ENCODE measurements at regions of chr2 and their contacts with region 1.

Region 1: DNA sequence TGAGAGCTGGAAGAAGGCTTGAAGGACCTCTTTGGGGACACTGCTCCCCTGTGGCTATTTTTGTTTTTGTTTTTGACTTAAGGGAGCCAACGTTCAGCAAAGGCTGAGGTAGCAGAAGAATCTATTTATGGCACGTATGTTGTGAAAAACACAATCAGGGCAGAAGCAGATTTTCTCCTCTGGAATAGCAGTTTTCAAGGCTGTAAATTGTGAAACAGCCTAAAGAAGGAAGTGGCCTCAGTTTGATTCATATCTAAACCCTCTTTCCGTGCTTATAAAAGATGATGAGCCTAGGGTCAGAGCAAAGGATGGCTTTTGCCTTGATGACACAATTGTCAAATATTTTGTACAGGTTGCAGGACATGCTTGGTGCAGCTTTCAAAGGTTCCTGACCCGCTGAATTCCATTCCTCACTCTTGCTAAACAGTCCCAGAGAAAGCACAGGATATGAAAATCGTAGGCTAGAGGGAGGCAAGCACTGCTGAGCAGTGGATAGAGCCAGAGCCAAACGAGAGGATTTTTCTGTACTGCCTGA is 106.2 kb upstream of the DLX2 start:
- DNase-seq: peak; percentile 80
- H3K4me3 ChIP-seq: no peak overlapping the region
- H3K27ac ChIP-seq: peak overlapping the region; percentile 47
- H3K4me1 ChIP-seq: peaks cover 28% of the 10 kb centered on the region
- H3K27me3 ChIP-seq: no peaks in the 10 kb centered on the region
- CTCF ChIP-seq: peak in 1 of 2 donors; percentile 28

Region 2: GRCh38 chr2:172052000-172052983 is 156.6 kb before region 1 on chr2:
- CTCF ChIA-PET with region 1: no interaction called
- dilution Hi-C with region 1: no loop called
- in situ Hi-C with region 1: no loop called
- intact Hi-C with region 1: no loop called
- DNase-seq: peak; percentile 5
- H3K4me3 ChIP-seq: no peak overlapping the region
- H3K27ac ChIP-seq: no peak overlapping the region
- H3K4me1 ChIP-seq: no peaks in the 10 kb centered on the region
- H3K27me3 ChIP-seq: no peaks in the 10 kb centered on the region
- CTCF ChIP-seq: no peak

Region 3: GRCh38 chr2:172226244-172227061 is 17.6 kb after region 1 on chr2:
- CTCF ChIA-PET with region 1: no interaction called
- dilution Hi-C with region 1: no loop called
- in situ Hi-C with region 1: no loop called
- intact Hi-C with region 1: loop called (anchors 1 kb)
- DNase-seq: peak; percentile 56
- H3K4me3 ChIP-seq: no peak overlapping the region
- H3K27ac ChIP-seq: peak overlapping the region; percentile 63
- H3K4me1 ChIP-seq: peaks cover 52% of the 10 kb centered on the region
- H3K27me3 ChIP-seq: no peaks in the 10 kb centered on the region
- CTCF ChIP-seq: peak; percentile 72 to 78

Region 4: DNA sequence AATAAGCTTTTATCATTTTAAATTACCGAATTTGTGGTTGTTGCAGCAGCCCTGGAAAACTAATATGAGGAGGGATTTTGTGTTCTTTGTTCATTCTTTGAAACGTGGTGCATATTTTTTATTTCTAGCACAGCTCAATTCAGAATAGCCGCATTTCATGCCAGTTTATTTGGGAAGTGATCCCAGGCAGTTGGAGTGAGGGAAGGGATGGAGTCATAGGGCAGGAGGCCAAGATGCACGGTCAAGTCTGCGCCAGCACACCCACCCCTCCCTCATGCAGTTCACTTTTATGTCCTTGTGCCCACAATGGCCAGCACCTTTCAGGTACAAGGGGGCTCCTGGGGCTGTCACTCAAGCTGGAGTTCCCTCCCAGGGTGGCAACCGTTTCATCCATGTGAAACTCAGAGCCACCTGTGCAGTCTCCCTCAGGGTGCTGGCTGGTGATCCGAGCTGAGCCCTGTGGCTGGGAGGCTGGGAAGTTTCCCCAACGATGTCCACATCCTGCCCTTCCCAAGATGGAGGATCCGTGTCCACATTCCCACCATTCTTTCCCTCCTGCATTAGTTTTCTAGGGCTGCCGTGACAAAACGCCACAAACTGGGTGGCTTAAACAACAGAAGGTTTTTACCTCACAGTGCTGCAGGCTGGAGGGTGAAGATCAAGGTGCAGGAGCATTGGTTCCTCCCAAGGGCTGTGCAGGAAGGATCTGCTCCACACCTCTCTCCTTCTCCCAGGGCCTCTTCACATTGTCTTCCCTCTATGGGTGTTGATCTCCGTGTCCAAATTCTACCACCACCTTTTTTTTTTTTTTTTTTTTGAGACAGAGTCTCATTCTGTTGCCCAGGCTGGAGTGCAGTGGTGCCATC is 150.1 kb after region 1 on chr2:
- CTCF ChIA-PET with region 1: no interaction called
- dilution Hi-C with region 1: no loop called
- in situ Hi-C with region 1: no loop called
- intact Hi-C with region 1: no loop called
- DNase-seq: no peak
- H3K4me3 ChIP-seq: no peak overlapping the region
- H3K27ac ChIP-seq: no peak overlapping the region
- H3K4me1 ChIP-seq: peaks cover 2% of the 10 kb centered on the region
- H3K27me3 ChIP-seq: no peaks in the 10 kb centered on the region
- CTCF ChIP-seq: no peak

Measured in mammary epithelial cell (primary cell).